ENCODE measurements at regions of chr2 and their contacts with region 1.

Region 1: DNA sequence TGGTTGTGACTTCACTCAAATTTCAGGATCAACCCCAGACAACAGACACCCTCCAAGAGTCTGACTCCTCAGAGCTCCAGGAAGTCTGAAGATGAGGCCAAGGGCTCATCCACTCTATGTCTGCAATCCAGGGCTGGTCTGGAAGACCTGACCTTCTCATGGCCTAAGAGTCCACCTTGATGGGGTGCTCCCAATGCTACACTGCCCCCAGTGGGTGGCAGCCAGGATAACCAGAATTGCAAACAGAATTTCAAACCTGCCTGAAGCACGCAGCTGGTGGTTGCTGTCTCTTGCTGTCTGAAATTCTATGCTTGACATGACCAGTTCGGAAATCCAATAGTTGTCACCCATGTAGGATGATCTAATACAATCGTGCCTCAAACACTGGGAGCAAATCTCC is 96.0 kb downstream of the UXS1 start:
- DNase-seq: no peak
- H3K4me3 ChIP-seq: no peak overlapping the region
- H3K4me3 Mint-ChIP-seq: peak overlapping the region in 3 of 8 donors; percentile 5 to 41 (median 34)
- H3K27ac ChIP-seq: peak overlapping the region; percentile 69
- H3K27ac Mint-ChIP-seq: peak overlapping the region in 6 of 7 donors; percentile 1 to 87 (median 50)
- H3K4me1 ChIP-seq: peaks cover 56% of the 10 kb centered on the region
- H3K4me1 Mint-ChIP-seq: peaks cover 25 to 57% (median 41%) of the 10 kb centered on the region in 4 donors
- H3K27me3 ChIP-seq: no peaks in the 10 kb centered on the region
- H3K27me3 Mint-ChIP-seq: no peaks in the 10 kb centered on the region

Region 2: DNA sequence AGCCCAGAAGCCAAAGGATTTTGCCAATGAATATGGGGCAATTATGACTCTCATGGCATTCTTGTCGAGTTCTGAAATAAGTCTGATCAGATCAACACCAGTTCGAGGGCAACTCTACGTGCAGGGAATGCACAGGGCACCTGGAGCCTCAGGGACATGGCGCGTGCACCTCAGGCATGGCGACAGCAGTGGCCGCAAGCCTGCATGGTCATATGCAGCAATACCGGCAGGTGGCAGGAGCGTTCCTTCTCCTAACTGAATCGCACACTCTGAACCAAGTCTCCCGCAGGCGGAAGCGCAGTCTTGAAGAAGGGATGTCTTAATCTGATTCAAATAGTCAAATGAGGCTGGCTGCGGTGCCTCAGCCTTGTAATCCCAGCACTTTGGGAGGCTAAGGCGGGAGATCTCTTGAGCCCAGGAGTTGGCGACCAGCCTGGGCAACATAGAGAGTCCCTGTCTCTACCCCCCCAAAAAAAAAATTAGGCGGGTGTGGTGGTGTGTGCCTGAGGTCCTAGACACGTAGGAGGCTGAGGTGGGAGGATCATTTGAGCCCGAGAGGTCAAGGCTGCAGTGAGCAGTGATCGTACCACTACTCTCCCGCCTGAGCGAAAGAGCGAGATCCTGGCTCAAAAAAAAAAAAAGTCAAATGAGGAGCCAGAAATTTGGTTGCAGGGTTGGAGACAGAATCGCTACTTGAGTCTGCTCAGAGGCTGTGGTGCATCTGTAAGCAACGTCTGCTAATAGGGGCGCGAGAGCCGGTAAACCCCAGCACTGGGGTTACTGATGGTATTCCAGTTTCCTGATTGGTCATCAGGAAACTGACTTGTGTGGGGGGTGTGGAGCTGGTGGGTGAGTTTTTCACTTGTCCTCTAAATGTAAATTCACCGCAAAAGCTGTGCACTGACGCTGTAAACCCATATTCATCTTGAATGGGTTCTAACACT is 728.1 kb before region 1 on chr2:
- CTCF ChIA-PET with region 1: no interaction called
- POLR2A ChIA-PET with region 1: no interaction called
- intact Hi-C with region 1: loop called (anchors 2 kb)
- DNase-seq: peak; percentile 77 to 85 (median 82)
- H3K4me3 ChIP-seq: no peak overlapping the region
- H3K4me3 Mint-ChIP-seq: peak overlapping the region in 7 of 8 donors; percentile 0 to 65 (median 16)
- H3K27ac ChIP-seq: no peak overlapping the region
- H3K27ac Mint-ChIP-seq: peak overlapping the region in 5 of 7 donors; percentile 14 to 68 (median 25)
- H3K4me1 ChIP-seq: peaks cover 27% of the 10 kb centered on the region
- H3K4me1 Mint-ChIP-seq: peaks cover 15 to 27% (median 25%) of the 10 kb centered on the region in 4 donors
- H3K27me3 ChIP-seq: no peaks in the 10 kb centered on the region
- H3K27me3 Mint-ChIP-seq: no peaks in the 10 kb centered on the region

Region 3: DNA sequence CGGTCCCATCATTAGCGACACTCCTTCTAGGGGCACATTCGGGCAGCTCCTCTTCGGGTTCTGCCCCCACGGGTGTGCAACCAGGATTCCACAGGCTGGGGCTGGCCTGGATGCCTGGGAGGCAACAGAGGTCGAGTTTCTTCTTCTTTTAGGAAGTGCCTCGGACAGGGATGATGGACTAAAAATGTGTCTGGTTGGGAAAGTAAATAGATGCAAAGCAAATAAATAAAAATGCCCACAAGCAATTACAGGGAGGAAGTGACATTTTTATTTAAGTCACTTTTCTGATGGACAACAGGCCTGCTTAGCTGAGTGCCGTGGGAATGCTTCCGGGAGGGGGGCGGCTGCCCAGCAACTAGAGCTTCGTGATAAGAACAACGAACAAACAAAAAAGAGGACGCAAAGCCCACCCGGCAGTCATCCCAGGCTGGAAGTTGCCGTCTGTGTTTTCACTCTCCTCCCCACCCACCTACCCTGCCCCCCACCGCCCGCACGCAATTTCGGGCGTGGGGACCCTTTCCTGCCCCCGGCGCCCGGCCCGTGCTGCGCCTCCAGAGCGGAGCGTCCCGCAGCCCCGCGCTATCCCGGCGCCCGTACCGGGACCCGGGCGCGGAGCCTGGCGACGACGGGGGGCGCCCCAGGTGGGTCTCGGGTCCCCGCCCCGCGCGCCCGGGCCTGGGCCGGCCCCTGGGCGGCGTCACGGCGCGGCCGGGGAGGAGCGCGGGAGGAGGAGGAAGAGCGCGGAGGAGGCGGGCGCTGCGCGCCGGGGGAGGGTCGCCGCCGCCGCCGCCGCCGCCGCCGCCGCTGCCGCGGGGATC is 353.8 kb before region 1 on chr2:
- CTCF ChIA-PET with region 1: interaction called, 4 read pairs
- POLR2A ChIA-PET with region 1: interaction called, 34 read pairs
- intact Hi-C with region 1: loop called (anchors 2 kb)
- DNase-seq: peak; percentile 63 to 71 (median 69)
- H3K4me3 ChIP-seq: peak overlapping the region; percentile 36 to 38
- H3K4me3 Mint-ChIP-seq: peak overlapping the region; percentile 84 to 91 (median 88)
- H3K27ac ChIP-seq: peak overlapping the region; percentile 65
- H3K27ac Mint-ChIP-seq: peak overlapping the region; percentile 87 to 94 (median 93)
- H3K4me1 ChIP-seq: peaks cover 75% of the 10 kb centered on the region
- H3K4me1 Mint-ChIP-seq: peaks cover 60 to 89% (median 73%) of the 10 kb centered on the region in 4 donors
- H3K27me3 ChIP-seq: no peaks in the 10 kb centered on the region
- H3K27me3 Mint-ChIP-seq: no peaks in the 10 kb centered on the region

Region 4: GRCh38 chr2:105802587-105802986 is 295.5 kb before region 1 on chr2:
- CTCF ChIA-PET with region 1: interaction called, 7 read pairs
- POLR2A ChIA-PET with region 1: interaction called, 52 read pairs
- intact Hi-C with region 1: no loop called
- DNase-seq: peak; percentile 67 to 95 (median 76)
- H3K4me3 ChIP-seq: peak overlapping the region in 1 of 2 donors; percentile 3
- H3K4me3 Mint-ChIP-seq: peak overlapping the region; percentile 51 to 78 (median 76)
- H3K27ac ChIP-seq: peak overlapping the region; percentile 74
- H3K27ac Mint-ChIP-seq: peak overlapping the region; percentile 86 to 98 (median 95)
- H3K4me1 ChIP-seq: peaks cover 97% of the 10 kb centered on the region
- H3K4me1 Mint-ChIP-seq: peaks cover 83 to 98% (median 92%) of the 10 kb centered on the region in 4 donors
- H3K27me3 ChIP-seq: no peaks in the 10 kb centered on the region
- H3K27me3 Mint-ChIP-seq: no peaks in the 10 kb centered on the region

Region 5: GRCh38 chr2:105929516-105929915 is 168.6 kb before region 1 on chr2:
- CTCF ChIA-PET with region 1: interaction called, 10 read pairs
- POLR2A ChIA-PET with region 1: interaction called, 40 read pairs
- intact Hi-C with region 1: no loop called
- DNase-seq: peak; percentile 62 to 72 (median 68)
- H3K4me3 ChIP-seq: no peak overlapping the region
- H3K4me3 Mint-ChIP-seq: peak overlapping the region; percentile 33 to 81 (median 63)
- H3K27ac ChIP-seq: no peak overlapping the region
- H3K27ac Mint-ChIP-seq: peak overlapping the region; percentile 73 to 97 (median 90)
- H3K4me1 ChIP-seq: peaks cover 89% of the 10 kb centered on the region
- H3K4me1 Mint-ChIP-seq: peaks cover 50 to 66% (median 65%) of the 10 kb centered on the region in 4 donors
- H3K27me3 ChIP-seq: no peaks in the 10 kb centered on the region
- H3K27me3 Mint-ChIP-seq: no peaks in the 10 kb centered on the region

Region 6: DNA sequence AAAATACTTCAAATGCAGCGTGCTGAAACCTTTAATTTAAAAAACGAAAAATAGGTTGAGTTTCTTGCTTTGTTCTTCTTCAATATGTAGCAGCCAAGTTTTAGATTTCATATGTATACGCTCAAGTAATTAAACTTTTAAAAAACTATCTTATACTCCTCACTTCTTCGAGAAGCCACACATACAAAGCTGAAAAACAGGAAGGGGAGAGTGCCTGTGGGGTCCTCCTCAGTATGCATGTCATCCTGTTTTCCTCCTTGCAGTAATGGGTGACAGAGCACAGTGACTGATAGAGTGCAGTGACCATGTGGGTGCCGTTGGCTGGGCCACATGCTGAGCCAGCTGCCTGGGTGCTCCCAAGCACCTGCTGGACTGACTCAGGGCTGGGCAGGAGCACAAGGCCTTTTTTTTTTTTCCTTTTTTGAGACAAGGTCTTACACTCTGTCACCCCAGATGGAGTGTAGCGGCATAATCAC is 62.7 kb after region 1 on chr2:
- CTCF ChIA-PET with region 1: interaction called, 65 read pairs
- POLR2A ChIA-PET with region 1: interaction called, 48 read pairs
- intact Hi-C with region 1: no loop called
- DNase-seq: peak in 4 of 5 donors; percentile 56 to 70 (median 62)
- H3K4me3 ChIP-seq: peak overlapping the region in 1 of 2 donors; percentile 64
- H3K4me3 Mint-ChIP-seq: peak overlapping the region; percentile 87 to 98 (median 96)
- H3K27ac ChIP-seq: peak overlapping the region; percentile 80
- H3K27ac Mint-ChIP-seq: peak overlapping the region; percentile 91 to 99 (median 98)
- H3K4me1 ChIP-seq: peaks cover 87% of the 10 kb centered on the region
- H3K4me1 Mint-ChIP-seq: peaks cover 63 to 98% (median 79%) of the 10 kb centered on the region in 4 donors
- H3K27me3 ChIP-seq: no peaks in the 10 kb centered on the region
- H3K27me3 Mint-ChIP-seq: no peaks in the 10 kb centered on the region

Region 7: DNA sequence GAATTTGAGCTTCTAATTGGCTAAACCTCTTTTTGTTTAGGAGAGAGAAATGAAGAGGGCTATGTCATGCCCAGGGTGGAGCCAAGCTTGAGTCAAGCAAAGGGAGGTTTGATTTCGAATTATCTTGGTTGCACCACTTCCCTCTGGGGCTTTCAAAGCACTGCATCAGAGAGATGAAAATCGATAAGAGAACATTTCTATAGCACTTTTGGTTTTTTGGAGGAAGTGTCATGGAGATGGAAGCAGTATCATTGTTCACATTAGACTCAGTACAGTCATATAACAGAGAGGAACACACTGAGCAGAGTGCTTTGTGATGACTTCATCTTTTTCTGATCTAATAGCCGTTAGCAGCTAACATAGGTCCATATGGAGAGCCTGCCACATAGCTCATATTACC is 216.4 kb after region 1 on chr2:
- CTCF ChIA-PET with region 1: no interaction called
- POLR2A ChIA-PET with region 1: no interaction called
- intact Hi-C with region 1: no loop called
- DNase-seq: peak; percentile 16 to 57 (median 34)
- H3K4me3 ChIP-seq: no peak overlapping the region
- H3K4me3 Mint-ChIP-seq: no peak overlapping the region
- H3K27ac ChIP-seq: no peak overlapping the region
- H3K27ac Mint-ChIP-seq: peak overlapping the region in 3 of 7 donors; percentile 43 to 64 (median 57)
- H3K4me1 ChIP-seq: no peaks in the 10 kb centered on the region
- H3K4me1 Mint-ChIP-seq: peaks cover 6 to 9% (median 7%) of the 10 kb centered on the region in 4 donors
- H3K27me3 ChIP-seq: no peaks in the 10 kb centered on the region
- H3K27me3 Mint-ChIP-seq: no peaks in the 10 kb centered on the region